IMR-90 (cell line): ENCODE measurements at regions of chr4 and their contacts with region 1.

Region 1: DNA sequence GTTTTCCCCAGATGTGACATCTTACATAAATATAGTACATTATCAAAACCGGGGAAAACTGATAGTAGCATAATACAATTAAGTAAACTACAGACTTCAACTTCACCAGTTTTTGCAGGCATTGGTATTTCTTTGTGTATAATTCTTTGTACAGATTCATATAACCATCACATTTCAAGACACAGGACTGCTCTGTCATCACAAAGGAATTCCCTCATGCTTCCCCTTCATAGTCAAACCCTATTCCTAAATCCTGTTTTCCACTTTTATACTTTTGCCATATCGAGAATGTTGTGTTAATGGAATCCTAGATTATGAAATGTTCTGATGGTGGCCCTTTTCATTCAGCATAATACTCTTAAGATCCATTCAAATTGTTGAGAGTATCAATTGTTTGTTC is 36.0 kb downstream of the STIM2 start:
- DNase-seq: peak; percentile 71
- ATAC-seq: peak; percentile 95
- H3K4me3 ChIP-seq: no peak overlapping the region
- H3K27ac ChIP-seq: no peak overlapping the region
- H3K4me1 ChIP-seq: peaks cover 3% of the 10 kb centered on the region
- H3K27me3 ChIP-seq: no peaks in the 10 kb centered on the region
- CTCF ChIP-seq: no peak
- POLR2A ChIP-seq: no peak
- RAD21 ChIP-seq: no peak

Region 2: DNA sequence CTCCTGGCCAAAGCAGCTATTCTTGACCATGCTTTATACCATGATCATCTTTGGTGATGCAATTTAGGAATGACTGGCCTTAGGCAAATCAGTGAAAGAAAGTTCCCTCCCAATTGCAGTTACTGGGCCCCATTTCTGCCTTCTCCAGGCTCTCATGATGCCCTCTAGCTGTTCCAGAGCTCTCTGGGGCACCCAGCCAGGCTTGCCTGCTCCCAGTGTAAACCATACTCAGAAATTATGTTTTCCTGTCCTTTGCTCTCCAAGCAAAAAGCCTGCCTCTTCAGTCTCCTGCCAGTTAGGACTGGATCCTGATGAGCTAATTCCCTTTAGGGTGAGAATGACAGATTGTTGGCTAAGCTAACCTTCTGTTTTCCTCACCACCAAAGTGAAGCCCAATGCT is 661.1 kb before region 1 on chr4:
- CTCF ChIA-PET with region 1: no interaction called
- POLR2A ChIA-PET with region 1: no interaction called
- dilution Hi-C with region 1: no loop called
- in situ Hi-C with region 1: no loop called
- intact Hi-C with region 1: no loop called
- DNase-seq: peak; percentile 75
- ATAC-seq: peak; percentile 63
- H3K4me3 ChIP-seq: no peak overlapping the region
- H3K27ac ChIP-seq: no peak overlapping the region
- H3K4me1 ChIP-seq: peaks cover 14% of the 10 kb centered on the region
- H3K27me3 ChIP-seq: no peaks in the 10 kb centered on the region
- CTCF ChIP-seq: no peak; the same call in 1 of the 2 replicates
- POLR2A ChIP-seq: no peak
- RAD21 ChIP-seq: no peak

Region 3: GRCh38 chr4:26873391-26874026 is 23.1 kb before region 1 on chr4:
- CTCF ChIA-PET with region 1: no interaction called
- POLR2A ChIA-PET with region 1: no interaction called
- dilution Hi-C with region 1: no loop called
- in situ Hi-C with region 1: no loop called
- intact Hi-C with region 1: loop called (anchors 2 kb)
- DNase-seq: no peak
- ATAC-seq: no peak
- H3K4me3 ChIP-seq: no peak overlapping the region
- H3K27ac ChIP-seq: no peak overlapping the region
- H3K4me1 ChIP-seq: no peaks in the 10 kb centered on the region; the same call in 1 of the 2 replicates
- H3K27me3 ChIP-seq: no peaks in the 10 kb centered on the region
- CTCF ChIP-seq: no peak
- POLR2A ChIP-seq: no peak
- RAD21 ChIP-seq: no peak

Region 4: DNA sequence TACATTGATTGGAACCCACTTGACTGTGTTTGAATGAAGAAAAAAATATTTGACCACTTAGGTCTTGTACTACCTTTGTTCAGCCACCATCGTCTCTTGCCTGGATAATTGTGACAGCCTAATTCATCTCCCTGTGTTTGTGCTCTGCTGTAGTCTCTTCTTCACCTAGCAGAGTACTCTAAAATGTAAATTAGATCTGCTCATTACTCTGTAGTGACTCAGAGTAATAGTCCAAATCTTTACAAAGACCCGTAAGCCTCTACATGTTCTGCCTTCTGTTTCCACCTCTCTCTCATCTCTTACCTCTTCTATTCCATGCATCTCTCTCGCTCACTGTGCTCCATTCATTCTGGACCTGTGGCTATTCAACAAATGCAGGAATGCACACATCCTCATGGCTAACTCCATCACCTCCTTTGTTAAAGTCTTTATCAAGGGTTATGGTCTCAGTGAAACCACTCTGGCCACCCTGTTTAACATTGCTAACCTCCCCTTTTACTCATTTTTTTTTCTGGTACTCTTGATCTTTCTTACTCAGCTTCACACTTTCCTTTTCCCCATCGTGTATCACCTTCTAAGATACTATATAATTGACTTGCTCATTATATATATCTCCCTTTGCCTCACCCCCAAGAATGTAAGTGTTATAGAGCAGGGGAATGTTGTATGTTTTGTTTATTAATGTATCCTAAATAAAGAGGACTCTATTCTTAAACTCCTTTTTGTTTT is 62.5 kb after region 1 on chr4:
- CTCF ChIA-PET with region 1: no interaction called
- POLR2A ChIA-PET with region 1: no interaction called
- dilution Hi-C with region 1: no loop called
- in situ Hi-C with region 1: no loop called
- intact Hi-C with region 1: no loop called
- DNase-seq: no peak
- ATAC-seq: no peak
- H3K4me3 ChIP-seq: no peak overlapping the region
- H3K27ac ChIP-seq: no peak overlapping the region
- H3K4me1 ChIP-seq: peaks cover 2% of the 10 kb centered on the region; the same call in 1 of the 2 replicates
- H3K27me3 ChIP-seq: no peaks in the 10 kb centered on the region
- CTCF ChIP-seq: no peak
- POLR2A ChIP-seq: no peak
- RAD21 ChIP-seq: no peak

Region 5: DNA sequence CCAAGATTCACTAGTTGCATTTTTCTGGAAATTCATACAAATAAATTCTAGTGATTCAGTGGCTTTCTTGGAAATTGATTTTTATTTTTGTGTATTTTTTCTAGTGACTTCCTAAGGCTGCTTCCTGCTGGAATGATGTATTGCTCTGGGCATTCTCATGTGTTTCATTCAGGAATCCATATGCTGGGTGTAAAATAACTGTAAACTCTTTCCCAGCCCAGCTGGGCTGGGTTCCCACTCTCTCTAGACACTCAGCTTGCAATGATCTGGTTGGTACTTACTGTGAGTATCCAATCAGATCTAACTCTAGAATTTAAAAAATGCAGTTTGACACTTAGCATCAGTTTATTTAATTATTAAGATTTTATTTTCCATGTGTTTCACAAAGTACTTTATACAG is 846.2 kb after region 1 on chr4:
- CTCF ChIA-PET with region 1: no interaction called
- POLR2A ChIA-PET with region 1: no interaction called
- dilution Hi-C with region 1: no loop called
- in situ Hi-C with region 1: no loop called
- intact Hi-C with region 1: no loop called
- DNase-seq: no peak
- ATAC-seq: no peak
- H3K4me3 ChIP-seq: no peak overlapping the region
- H3K27ac ChIP-seq: no peak overlapping the region
- H3K4me1 ChIP-seq: no peaks in the 10 kb centered on the region
- H3K27me3 ChIP-seq: no peaks in the 10 kb centered on the region
- CTCF ChIP-seq: no peak
- POLR2A ChIP-seq: no peak
- RAD21 ChIP-seq: no peak